Activated CD4-positive, alpha-beta memory T cell treated with anti-CD3 and anti-CD28 coated beads for 36 hours (primary cell): ENCODE measurements at regions of chr7 and their contacts with region 1.

Region 1: DNA sequence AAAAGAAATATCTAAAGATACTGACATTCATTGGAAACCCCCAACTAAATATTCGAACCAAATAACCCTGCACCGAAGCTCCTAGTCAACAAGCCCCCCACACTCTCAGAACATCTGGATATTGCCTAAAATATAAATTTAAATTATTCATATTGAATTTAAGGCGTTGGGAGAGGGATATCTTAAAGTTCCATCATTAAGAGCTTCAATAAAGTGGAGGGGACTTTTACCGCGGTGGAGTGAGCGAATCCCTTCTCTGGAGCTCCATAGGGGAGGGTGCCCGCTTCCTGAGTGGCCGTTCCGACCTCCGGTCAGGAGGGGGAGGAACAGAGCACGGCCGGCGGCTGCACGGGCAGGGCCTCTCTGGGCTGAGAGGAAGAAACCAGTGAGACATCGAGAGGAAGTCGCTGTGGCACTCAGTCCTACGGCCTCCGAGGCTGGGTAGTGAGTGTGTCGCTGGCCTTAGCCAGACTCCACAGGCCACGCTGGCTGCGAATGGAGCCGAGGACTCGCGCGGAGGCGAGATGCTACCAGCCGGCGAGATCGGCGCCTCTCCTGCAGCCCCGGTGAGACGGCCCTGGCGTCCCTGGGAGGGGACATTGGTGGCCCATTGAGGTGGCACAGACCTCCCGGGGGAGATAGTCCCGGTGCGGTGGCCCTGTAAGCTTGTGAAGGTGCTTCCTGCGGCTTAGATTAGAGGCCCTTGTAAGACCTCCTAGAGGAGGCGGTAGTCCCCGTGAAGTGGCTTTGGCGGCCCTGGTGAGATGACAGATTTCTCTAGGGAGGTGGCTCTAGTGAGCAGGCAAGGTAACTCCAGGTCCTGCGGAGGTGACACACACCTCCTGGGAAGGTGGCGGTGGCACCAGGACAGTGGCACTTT is at the start of gene RINT1:
- DNase-seq: peak; percentile 94
- H3K4me3 Mint-ChIP-seq: peak within 1 kb of the TSS; percentile 86
- H3K27ac Mint-ChIP-seq: peak within 1 kb of the TSS; percentile 88
- H3K4me1 Mint-ChIP-seq: peaks cover 22% of the 10 kb centered on the region
- H3K27me3 Mint-ChIP-seq: no peaks in the 10 kb centered on the region
- total RNA-seq, gene RINT1: 23.3 to 26.7 TPM

Region 2: DNA sequence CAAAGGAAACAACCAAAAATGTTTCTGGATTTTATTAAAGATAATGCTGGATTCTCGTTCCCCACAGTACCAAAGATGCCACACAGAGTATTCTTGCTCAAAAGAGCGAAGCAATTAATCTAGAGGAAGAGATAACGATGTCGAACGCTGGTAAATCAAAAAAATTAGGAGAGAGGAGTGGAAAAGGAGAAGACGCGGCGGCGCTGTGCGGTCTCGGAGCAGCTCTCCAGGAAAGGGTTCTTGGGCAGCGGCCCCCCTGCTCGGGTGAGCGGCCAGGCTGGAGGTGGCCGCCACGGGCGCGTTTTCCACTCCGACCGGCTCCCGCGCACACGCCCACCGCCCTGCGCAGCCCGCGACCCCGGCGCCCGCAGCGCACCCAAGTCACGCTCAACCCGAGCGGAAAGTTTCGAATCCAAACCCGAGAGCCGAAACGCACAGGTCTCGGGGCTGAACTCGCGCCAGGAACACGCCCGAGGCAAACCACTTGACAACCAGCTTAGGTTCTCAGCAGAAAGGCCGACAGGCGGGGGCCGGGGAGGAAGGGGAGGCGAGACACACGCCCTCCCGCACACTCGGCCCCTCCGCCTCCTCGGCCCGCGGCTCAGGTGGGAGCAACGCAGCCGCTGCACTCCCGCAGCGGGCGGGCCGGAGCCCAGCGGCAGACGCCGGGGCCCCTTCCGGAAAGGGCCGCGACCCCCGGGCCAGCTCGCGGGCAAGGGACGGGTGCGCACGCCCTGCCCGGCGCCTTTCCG is 144.2 kb before region 1 on chr7:
- CTCF ChIA-PET with region 1: no interaction called
- POLR2A ChIA-PET with region 1: no interaction called
- intact Hi-C with region 1: loop called (anchors 2 kb)
- DNase-seq: peak; percentile 61
- H3K4me3 Mint-ChIP-seq: peak overlapping the region; percentile 81
- H3K27ac Mint-ChIP-seq: peak overlapping the region; percentile 59
- H3K4me1 Mint-ChIP-seq: peaks cover 32% of the 10 kb centered on the region
- H3K27me3 Mint-ChIP-seq: no peaks in the 10 kb centered on the region

Region 3: GRCh38 chr7:105439174-105439893 is 92.7 kb before region 1 on chr7:
- CTCF ChIA-PET with region 1: no interaction called
- POLR2A ChIA-PET with region 1: no interaction called
- intact Hi-C with region 1: no loop called
- DNase-seq: peak; percentile 46
- H3K4me3 Mint-ChIP-seq: no peak overlapping the region
- H3K27ac Mint-ChIP-seq: peak overlapping the region; percentile 28
- H3K4me1 Mint-ChIP-seq: peaks cover 11% of the 10 kb centered on the region
- H3K27me3 Mint-ChIP-seq: no peaks in the 10 kb centered on the region

Region 4: GRCh38 chr7:105589356-105590077 is 57.5 kb after region 1 on chr7:
- CTCF ChIA-PET with region 1: interaction called, 11 read pairs
- POLR2A ChIA-PET with region 1: interaction called, 3 read pairs
- intact Hi-C with region 1: loop called (anchors 2 kb)
- DNase-seq: peak; percentile 75
- H3K4me3 Mint-ChIP-seq: no peak overlapping the region
- H3K27ac Mint-ChIP-seq: no peak overlapping the region
- H3K4me1 Mint-ChIP-seq: peaks cover 5% of the 10 kb centered on the region
- H3K27me3 Mint-ChIP-seq: no peaks in the 10 kb centered on the region

Region 5: GRCh38 chr7:105678811-105679495 is 146.9 kb after region 1 on chr7:
- CTCF ChIA-PET with region 1: no interaction called
- POLR2A ChIA-PET with region 1: no interaction called
- intact Hi-C with region 1: loop called (anchors 5 kb)
- DNase-seq: peak; percentile 54
- H3K4me3 Mint-ChIP-seq: peak overlapping the region; percentile 78
- H3K27ac Mint-ChIP-seq: peak overlapping the region; percentile 95
- H3K4me1 Mint-ChIP-seq: peaks cover 75% of the 10 kb centered on the region
- H3K27me3 Mint-ChIP-seq: no peaks in the 10 kb centered on the region